Heart left ventricle (tissue), 16 donors: ENCODE measurements at regions of chr14 and their contacts with region 1.

Region 1: GRCh38 chr14:75487155-75487671 is 35.1 kb upstream of the BATF start:
- DNase-seq: no peak
- ATAC-seq: no peak
- H3K4me3 ChIP-seq: no peak overlapping the region
- H3K27ac ChIP-seq: no peak overlapping the region
- H3K4me1 ChIP-seq: peaks cover 0 to 4% (median 0%) of the 10 kb centered on the region in 12 donors
- H3K27me3 ChIP-seq: no peaks in the 10 kb centered on the region
- CTCF ChIP-seq: no peak
- POLR2A ChIP-seq: no peak

Region 2: GRCh38 chr14:75141967-75142366 is 345.2 kb before region 1 on chr14:
- intact Hi-C with region 1: loop called in 4 of 10 experiments (anchors 5 to 10 kb)
- DNase-seq: no peak
- ATAC-seq: peak in 2 of 4 donors; percentile 32 to 55
- H3K4me3 ChIP-seq: no peak overlapping the region
- H3K27ac ChIP-seq: peak overlapping the region in 2 of 12 donors; percentile 30 to 60
- H3K4me1 ChIP-seq: peaks cover 6 to 92% (median 48%) of the 10 kb centered on the region in 12 donors
- H3K27me3 ChIP-seq: no peaks in the 10 kb centered on the region
- CTCF ChIP-seq: peak in 10 of 12 donors; percentile 12 to 50 (median 41)
- POLR2A ChIP-seq: no peak